Gastrocnemius medialis (tissue), 4 donors: ENCODE measurements at regions of chr7 and their contacts with region 1.

Region 1: GRCh38 chr7:18666107-18666728 is 170.7 kb downstream of the HDAC9 start:
- DNase-seq: peak; percentile 51 to 65
- ATAC-seq: peak; percentile 70 to 95
- H3K4me3 ChIP-seq: no peak overlapping the region
- H3K27ac ChIP-seq: no peak overlapping the region
- H3K4me1 ChIP-seq: no peaks in the 10 kb centered on the region
- H3K27me3 ChIP-seq: no peaks in the 10 kb centered on the region
- CTCF ChIP-seq: peak; percentile 58 to 94 (median 81)
- POLR2A ChIP-seq: no peak

Region 2: GRCh38 chr7:18590744-18591340 is 75.4 kb before region 1 on chr7:
- in situ Hi-C with region 1: no loop called
- intact Hi-C with region 1: loop called (anchors 2 kb)
- DNase-seq: no peak
- ATAC-seq: no peak
- H3K4me3 ChIP-seq: no peak overlapping the region
- H3K27ac ChIP-seq: no peak overlapping the region
- H3K4me1 ChIP-seq: no peaks in the 10 kb centered on the region
- H3K27me3 ChIP-seq: no peaks in the 10 kb centered on the region
- CTCF ChIP-seq: peak in 4 of 5 experiments; percentile 31 to 41 (median 38)
- POLR2A ChIP-seq: no peak